B cell (primary cell): ENCODE measurements at regions of chr11 and their contacts with region 1.

Region 1: GRCh38 chr11:33899383-33900037 is 7.6 kb upstream of the LMO2 start:
- DNase-seq: no peak
- ATAC-seq: no peak
- H3K4me3 ChIP-seq: peak overlapping the region in 1 of 5 experiments; percentile 8
- H3K4me3 Mint-ChIP-seq: no peak overlapping the region
- H3K27ac ChIP-seq: peak overlapping the region in 1 of 2 donors; percentile 64
- H3K27ac Mint-ChIP-seq: peak overlapping the region; percentile 5
- H3K4me1 ChIP-seq: peaks cover 46 to 48% of the 10 kb centered on the region in 2 donors
- H3K4me1 Mint-ChIP-seq: peaks cover 53% of the 10 kb centered on the region
- H3K27me3 ChIP-seq: no peaks in the 10 kb centered on the region
- H3K27me3 Mint-ChIP-seq: no peaks in the 10 kb centered on the region
- CTCF ChIP-seq: no peak

Region 2: DNA sequence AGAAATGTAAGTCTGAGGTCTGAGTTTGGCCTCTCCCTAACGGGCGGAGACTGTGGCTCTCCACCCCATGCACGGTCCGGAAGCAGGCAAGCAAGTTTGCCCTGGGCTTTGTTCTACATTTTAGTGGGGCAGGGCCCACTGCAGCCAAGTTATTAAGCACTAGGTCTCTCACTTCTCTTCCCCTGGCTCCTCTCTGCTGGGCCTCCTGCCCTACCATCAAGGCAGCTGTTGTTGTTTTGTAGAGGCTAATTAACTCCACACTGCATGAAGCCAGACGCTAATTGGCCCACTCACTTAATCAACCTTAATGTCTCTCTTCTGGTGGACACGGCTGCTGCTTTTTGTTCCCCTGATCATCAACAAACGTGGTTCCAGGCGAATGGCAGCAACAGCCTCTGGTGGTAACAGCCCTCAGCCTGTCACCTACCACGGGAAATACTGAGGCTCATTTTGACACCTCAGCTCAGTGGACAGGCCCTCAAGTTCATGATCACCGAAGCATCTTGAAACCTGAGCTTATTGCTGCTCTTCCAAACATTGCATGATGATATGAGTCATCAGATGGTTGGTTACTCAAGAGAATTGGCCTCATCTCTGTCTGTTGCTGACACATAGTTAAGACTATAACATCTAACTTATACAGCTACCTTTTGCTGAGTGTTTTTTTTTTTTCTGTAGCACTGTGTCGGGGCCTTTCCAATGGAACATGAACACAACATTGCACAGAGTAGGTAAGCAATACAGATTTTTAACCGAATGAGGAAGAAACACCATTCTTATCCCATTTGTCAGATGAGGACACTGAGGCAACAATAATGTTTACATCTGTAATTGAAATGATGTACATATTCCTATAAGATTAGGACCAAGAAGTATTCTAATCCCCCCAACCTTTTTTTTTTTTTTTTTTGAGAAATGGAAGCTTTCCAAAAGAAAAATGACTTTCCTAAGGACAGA is 13.2 kb after region 1 on chr11:
- CTCF ChIA-PET with region 1: interaction called, 6 read pairs
- POLR2A ChIA-PET with region 1: interaction called, 3 read pairs
- intact Hi-C with region 1: loop called (anchors 1 kb)
- DNase-seq: peak; percentile 29
- ATAC-seq: peak; percentile 76
- H3K4me3 ChIP-seq: no peak overlapping the region
- H3K4me3 Mint-ChIP-seq: peak overlapping the region; percentile 29
- H3K27ac ChIP-seq: peak overlapping the region; percentile 2 to 49
- H3K27ac Mint-ChIP-seq: peak overlapping the region; percentile 82
- H3K4me1 ChIP-seq: peaks cover 14 to 15% of the 10 kb centered on the region in 2 donors
- H3K4me1 Mint-ChIP-seq: peaks cover 24% of the 10 kb centered on the region
- H3K27me3 ChIP-seq: peaks cover 0 to 14% (median 3%) of the 10 kb centered on the region in 4 experiments
- H3K27me3 Mint-ChIP-seq: peaks cover 27% of the 10 kb centered on the region
- CTCF ChIP-seq: no peak

Region 3: DNA sequence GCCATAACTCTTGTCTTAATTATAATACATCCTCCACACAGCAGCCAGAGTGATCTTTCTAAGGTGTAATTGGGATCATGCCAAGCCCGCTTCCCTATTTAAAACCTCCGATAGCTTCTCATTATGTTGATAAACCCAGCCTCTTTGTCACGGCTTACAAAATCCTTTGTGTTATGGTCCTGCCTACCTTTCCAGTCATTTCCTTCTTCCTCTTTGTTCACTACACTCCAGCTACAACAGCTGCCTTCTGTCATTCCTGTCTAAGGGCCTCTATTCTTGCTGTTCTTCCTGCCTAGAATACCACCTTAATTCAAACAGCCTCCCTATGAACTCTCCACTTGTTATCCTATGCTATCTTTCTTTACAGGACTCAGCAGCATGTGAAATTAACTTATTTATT is 81.4 kb after region 1 on chr11:
- CTCF ChIA-PET with region 1: no interaction called
- POLR2A ChIA-PET with region 1: no interaction called
- intact Hi-C with region 1: no loop called
- DNase-seq: no peak
- ATAC-seq: no peak
- H3K4me3 ChIP-seq: no peak overlapping the region
- H3K4me3 Mint-ChIP-seq: no peak overlapping the region
- H3K27ac ChIP-seq: no peak overlapping the region
- H3K27ac Mint-ChIP-seq: no peak overlapping the region
- H3K4me1 ChIP-seq: no peaks in the 10 kb centered on the region
- H3K4me1 Mint-ChIP-seq: no peaks in the 10 kb centered on the region
- H3K27me3 ChIP-seq: no peaks in the 10 kb centered on the region
- H3K27me3 Mint-ChIP-seq: peaks cover 9% of the 10 kb centered on the region
- CTCF ChIP-seq: no peak